Sciatic nerve (tissue), 2 donors: ENCODE measurements at regions of chr10 and their contacts with region 1.

Region 1: GRCh38 chr10:12934777-12935176 is 66.7 kb downstream of the CCDC3 start:
- DNase-seq: no peak
- ATAC-seq: no peak

Region 2: GRCh38 chr10:12782537-12782936 is 152.2 kb before region 1 on chr10:
- intact Hi-C with region 1: no loop called
- DNase-seq: no peak
- ATAC-seq: no peak

Region 3: GRCh38 chr10:12890958-12891357 is 43.8 kb before region 1 on chr10:
- intact Hi-C with region 1: loop called (anchors 1 kb)
- DNase-seq: no peak
- ATAC-seq: no peak

Region 4: DNA sequence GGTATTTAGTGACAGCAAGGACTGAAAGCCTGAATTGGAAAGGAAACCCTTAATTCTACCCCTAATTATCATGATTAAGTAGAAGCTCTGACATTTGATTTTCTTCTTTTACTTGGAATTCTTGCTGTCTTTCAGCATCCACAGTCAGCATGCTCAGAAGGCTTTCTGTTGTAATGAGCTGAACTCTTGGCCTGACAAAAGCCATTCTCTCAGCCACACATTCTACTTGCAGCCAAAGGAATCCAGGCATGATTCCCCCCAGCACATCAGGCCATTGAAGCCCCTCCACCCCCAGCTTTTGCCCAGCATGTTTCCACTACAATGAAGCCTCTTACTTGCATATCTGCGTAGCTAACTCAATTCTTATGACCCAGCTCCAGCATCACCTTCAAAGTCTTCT is 1490.3 kb after region 1 on chr10:
- intact Hi-C with region 1: no loop called
- DNase-seq: no peak
- ATAC-seq: no peak